HEK293 (cell line): ENCODE measurements at regions of chr1 and their contacts with region 1.

Region 1: GRCh38 chr1:205111354-205111753 is 10.4 kb downstream of the RBBP5 start:
- H3K4me3 ChIP-seq: no peak overlapping the region
- H3K27ac ChIP-seq: no peak overlapping the region
- H3K4me1 ChIP-seq: no peaks in the 10 kb centered on the region
- CTCF ChIP-seq: no peak

Region 2: DNA sequence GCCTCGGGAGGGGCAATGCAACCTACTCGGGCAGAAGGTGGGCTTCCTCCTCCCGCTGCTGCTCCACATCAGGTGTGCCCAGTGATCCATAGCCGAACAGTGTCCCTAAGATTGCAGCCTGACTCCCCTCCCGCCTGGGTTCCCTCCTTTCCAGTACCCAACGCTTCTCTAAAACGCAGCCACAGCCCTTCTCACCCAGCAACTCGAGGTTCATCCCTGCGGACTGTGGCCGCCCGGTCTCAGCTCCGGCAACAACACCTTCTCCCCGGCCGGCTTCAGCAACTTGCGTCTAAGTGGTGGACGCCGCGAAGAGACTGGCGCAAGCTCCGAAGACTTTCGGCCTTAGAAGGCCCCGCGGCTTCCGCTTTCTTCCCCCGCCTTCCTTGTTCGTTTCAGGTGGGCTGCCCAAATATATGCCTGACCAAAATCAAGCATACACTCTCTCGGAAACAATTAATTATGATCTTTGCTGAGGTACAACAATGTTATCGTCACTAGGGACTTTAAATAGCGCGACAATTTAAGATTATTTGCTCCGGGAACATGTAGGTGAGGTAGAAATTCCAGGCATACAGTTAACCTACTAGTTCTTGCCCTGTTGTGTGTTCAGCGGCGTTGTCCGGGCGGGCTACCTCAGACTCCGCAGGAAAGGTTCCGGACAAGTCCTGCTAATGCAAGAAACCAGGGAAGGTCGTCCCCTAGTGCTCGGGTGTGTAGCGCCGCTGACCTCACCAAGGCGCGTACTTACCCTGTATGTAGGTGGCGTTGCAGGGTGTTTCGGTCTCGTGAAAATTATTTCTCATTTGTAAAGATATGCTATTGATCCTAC is 10.5 kb after region 1 on chr1 and contains the start of gene RBBP5:
- CTCF ChIA-PET with region 1: interaction called, 3 read pairs
- POLR2A ChIA-PET with region 1: interaction called, 12 read pairs
- H3K4me3 ChIP-seq: peak within 1 kb of the TSS; percentile 96
- H3K27ac ChIP-seq: peak within 1 kb of the TSS; percentile 71
- H3K4me1 ChIP-seq: 0 out of 2 replicates have a peak, but pooled peaks cover 2% of the 10 kb centered on the region
- CTCF ChIP-seq: peak; percentile 99

Region 3: GRCh38 chr1:205133287-205133686 is 21.9 kb after region 1 on chr1:
- CTCF ChIA-PET with region 1: no interaction called
- POLR2A ChIA-PET with region 1: no interaction called
- H3K4me3 ChIP-seq: no peak overlapping the region
- H3K27ac ChIP-seq: no peak overlapping the region
- H3K4me1 ChIP-seq: no peaks in the 10 kb centered on the region
- CTCF ChIP-seq: no peak

Region 4: DNA sequence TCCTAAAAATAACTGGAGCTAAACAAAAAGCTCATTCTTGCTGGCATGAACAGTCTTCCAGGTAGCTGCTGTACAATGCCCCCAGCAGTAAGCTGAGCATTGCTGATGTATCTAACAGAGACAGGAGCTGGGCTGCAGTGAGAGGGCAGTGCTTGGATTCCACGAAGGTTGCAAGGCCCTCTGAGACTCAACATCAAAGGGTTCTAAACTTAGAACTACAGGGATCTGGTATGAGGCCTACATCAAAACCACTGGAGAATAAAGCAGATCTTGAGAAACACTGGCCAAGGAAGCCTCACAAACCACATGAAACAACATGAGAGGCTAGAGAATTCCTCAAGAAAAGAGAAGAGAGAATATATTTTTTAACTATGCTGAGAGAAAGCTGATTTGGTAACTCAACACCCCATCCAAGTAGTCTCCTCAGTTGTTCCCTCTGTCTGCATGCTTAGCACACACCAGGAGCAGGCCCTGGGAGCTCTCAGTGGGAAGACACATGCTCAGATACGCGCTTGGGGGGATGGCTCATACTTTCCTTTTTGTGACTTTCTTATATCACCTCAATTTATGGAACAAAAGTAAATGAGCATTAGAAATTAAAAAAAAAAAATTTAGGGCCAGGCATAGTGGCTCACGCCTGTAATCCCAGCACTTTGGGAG is 72.5 kb after region 1 on chr1:
- CTCF ChIA-PET with region 1: no interaction called
- POLR2A ChIA-PET with region 1: no interaction called
- H3K4me3 ChIP-seq: no peak overlapping the region
- H3K27ac ChIP-seq: no peak overlapping the region
- H3K4me1 ChIP-seq: no peaks in the 10 kb centered on the region
- CTCF ChIP-seq: no peak